PC-9 (cell line): ENCODE measurements at regions of chr22 and their contacts with region 1.

Region 1: DNA sequence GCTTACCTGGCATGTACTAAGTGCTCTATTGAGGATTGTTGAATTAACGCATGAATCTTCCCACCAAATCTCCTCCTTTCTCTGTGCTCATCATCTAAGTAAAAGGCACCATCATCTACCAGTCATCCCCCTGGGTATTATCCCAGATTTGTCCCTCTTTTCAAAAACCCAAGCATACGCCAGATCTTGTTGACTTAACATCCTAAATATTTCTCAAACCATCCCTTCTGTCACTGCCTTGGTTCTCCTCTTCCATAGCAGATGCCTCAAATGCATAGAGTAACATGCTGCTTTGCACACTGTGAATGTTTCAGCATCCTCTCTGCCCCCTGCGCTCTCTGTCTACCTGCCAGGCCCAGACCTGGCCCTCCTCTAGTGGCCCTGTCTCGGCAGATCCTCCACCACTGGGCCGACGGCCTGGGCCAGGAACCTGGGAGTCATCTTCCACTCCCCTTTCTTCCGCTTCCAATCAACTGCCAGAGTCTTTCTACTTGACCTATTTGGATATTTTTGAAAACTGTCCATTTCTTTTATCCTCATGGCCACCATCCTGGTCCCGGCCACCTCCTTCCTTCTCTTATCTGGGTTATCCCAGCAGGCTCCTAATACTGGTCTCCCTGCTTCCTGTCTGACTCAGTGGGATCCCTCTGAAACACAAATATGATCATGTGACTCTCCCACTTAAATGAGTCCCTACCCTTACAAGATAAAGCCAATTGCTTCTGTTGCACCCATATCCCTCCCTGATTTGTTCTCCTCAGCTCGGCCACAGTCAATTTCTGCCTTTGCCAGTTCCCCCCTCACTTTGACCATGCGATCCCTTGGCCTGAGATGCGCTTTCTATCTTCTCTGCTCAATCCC is 3.4 kb upstream of the TAB1 start:
- DNase-seq: peak in 1 of 2 experiments; percentile 21
- H3K4me3 ChIP-seq: no peak overlapping the region
- H3K27ac ChIP-seq: no peak overlapping the region
- H3K4me1 ChIP-seq: peaks cover 6% of the 10 kb centered on the region
- H3K27me3 ChIP-seq: no peaks in the 10 kb centered on the region
- CTCF ChIP-seq: no peak

Region 2: GRCh38 chr22:39236321-39237317 is 159.5 kb before region 1 on chr22:
- CTCF ChIA-PET with region 1: no interaction called
- POLR2A ChIA-PET with region 1: interaction called, 15 read pairs
- intact Hi-C with region 1: no loop called
- DNase-seq: no peak
- H3K4me3 ChIP-seq: no peak overlapping the region
- H3K27ac ChIP-seq: no peak overlapping the region
- H3K4me1 ChIP-seq: peaks cover 49% of the 10 kb centered on the region
- H3K27me3 ChIP-seq: no peaks in the 10 kb centered on the region
- CTCF ChIP-seq: no peak

Region 3: DNA sequence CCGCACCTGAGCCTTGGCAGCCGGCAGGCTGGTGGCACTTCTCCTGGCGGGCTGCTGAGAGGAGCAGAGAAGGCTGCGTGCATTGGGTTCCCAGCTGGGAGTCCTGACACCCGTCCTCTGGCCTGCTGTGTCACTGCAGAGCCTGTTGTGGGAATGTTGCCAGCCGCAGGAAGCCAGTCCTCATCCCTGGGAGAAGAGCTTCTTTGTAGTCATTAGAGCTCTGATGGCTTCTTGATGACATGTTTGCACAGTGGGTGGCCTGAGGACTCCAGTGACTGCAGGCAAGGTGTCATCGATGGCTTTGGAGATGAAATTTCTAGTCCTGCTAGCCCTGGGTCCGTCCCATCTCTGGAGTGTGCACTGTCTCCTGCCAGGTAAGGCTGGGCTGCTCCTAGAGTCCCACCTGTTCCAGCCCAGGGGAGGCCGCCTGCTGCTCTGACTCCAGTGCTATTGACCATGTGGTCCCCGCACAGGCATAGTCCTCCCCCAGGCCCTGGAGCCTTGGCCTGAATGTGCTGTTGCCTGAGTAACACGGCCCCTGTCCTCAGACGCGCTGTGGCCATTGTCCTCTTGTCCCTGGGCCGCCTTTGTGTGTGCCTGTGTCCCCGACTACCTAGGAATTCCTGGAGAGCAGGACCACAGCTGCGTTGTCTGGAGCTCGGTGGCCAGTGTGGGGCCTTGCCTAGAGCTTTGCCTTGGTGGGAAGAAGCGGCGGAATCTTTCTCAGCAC is 303.6 kb after region 1 on chr22:
- CTCF ChIA-PET with region 1: no interaction called
- POLR2A ChIA-PET with region 1: no interaction called
- intact Hi-C with region 1: no loop called
- DNase-seq: no peak
- H3K4me3 ChIP-seq: no peak overlapping the region
- H3K27ac ChIP-seq: no peak overlapping the region
- H3K4me1 ChIP-seq: no peaks in the 10 kb centered on the region
- H3K27me3 ChIP-seq: peaks cover 68% of the 10 kb centered on the region
- CTCF ChIP-seq: no peak